PC-9 (cell line): ENCODE measurements at regions of chr16 and their contacts with region 1.

Region 1: DNA sequence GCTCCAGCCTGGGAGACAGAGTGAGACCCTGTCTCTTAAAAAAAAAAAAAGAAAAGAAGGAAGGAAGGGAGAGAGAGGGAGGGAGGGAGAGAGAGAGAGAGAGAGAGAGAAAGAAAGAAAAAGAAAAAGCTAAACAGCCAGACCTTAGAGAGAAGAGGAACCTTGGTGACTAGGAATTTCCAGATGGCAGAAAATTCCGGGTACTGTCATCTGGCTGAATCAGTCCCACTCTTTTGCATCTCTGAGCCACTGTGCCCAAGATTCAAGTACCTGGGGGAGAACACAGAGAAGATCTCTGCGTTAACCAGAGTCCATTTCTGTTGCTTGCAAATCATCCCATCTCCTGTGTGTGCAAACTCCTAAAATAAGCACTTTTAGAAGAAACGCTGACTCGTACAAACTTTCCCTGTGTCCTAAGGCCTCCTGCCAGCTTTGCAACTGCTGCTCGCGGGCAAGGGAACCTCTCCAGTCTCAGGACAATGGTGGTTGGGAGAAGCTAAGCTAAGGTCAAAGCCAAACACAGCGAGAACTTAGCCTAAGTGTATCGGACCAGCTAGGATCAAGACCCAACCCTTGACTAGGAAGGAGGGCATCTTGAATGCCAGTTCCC is 18.0 kb downstream of the BMERB1 start:
- DNase-seq: no peak
- H3K4me3 ChIP-seq: no peak overlapping the region
- H3K27ac ChIP-seq: no peak overlapping the region
- H3K4me1 ChIP-seq: no peaks in the 10 kb centered on the region
- H3K27me3 ChIP-seq: no peaks in the 10 kb centered on the region
- CTCF ChIP-seq: no peak

Region 2: DNA sequence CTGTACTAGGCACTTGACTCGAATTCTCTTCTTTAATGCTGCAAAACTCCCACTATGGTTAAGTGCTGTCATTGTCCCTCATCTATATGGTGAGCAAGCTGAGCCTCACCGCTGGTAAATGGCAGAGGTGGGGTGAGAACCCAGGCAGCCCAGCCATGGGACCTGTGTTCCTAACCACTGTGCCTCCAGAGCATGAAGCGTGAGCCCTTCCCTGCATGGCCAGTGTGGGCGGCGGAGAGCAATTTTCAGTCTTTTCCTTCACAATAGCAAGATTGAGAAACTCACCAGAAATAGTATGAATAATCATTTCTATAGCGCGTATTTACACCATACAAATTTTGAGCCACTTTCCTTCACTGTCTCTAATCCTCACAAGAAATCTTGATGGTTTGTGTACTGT is 810.4 kb before region 1 on chr16:
- CTCF ChIA-PET with region 1: interaction called, 14 read pairs
- POLR2A ChIA-PET with region 1: no interaction called
- intact Hi-C with region 1: no loop called
- DNase-seq: no peak
- H3K4me3 ChIP-seq: no peak overlapping the region
- H3K27ac ChIP-seq: no peak overlapping the region
- H3K4me1 ChIP-seq: no peaks in the 10 kb centered on the region
- H3K27me3 ChIP-seq: no peaks in the 10 kb centered on the region
- CTCF ChIP-seq: no peak

Region 3: DNA sequence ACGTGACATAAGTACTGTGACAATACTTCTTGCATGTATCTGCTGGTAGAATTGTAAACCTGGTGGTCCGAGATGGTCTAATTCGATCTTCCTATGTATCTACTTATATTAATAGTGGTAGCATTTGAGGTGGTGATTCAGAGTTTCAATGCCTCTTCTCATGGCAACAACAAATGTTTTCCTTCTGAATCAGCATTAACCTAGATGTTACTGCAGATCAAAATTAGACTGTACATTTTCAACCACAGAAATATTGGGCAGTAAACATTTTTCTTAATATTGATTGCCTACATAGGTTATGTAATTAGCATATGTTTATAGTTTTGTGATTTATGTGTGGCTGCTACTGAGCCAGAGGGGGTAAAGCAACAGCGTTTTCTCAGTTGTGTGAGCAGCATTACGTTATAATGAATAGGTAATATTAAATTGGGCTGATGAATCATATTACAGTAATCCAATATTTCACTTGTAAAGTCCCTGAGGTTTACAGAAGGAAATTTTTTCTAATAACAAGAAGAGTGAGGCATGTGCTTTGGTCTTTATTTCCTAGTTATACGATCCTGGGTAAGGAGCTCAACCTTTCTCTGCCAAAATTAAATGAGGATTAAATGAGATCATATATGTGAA is 36.8 kb before region 1 on chr16:
- CTCF ChIA-PET with region 1: no interaction called
- POLR2A ChIA-PET with region 1: no interaction called
- intact Hi-C with region 1: no loop called
- DNase-seq: peak in 1 of 2 experiments; percentile 81
- H3K4me3 ChIP-seq: peak overlapping the region; percentile 30; the same call in 1 of the 2 replicates
- H3K27ac ChIP-seq: peak overlapping the region; percentile 84
- H3K4me1 ChIP-seq: peaks cover 30% of the 10 kb centered on the region
- H3K27me3 ChIP-seq: no peaks in the 10 kb centered on the region
- CTCF ChIP-seq: no peak

Region 4: DNA sequence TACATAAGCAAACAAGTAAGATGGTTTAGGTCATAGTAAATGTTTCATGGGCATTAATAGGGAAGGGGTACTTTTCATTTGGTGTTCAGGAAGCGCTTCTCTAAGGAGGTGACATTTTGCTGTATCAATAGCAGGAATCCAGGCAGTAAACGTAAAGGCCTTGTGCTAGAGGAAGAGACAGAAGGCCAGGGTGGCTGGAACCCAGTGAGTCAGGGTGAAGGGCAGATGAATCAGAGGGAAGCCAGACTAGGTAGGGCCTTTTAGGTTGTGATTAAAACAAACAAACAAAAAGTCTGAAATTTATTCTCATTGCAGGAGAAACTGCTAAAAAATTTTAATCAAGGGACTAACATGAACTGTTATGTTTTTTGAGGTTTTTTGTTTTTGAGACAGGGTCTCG is 11.5 kb before region 1 on chr16:
- CTCF ChIA-PET with region 1: no interaction called
- POLR2A ChIA-PET with region 1: interaction called, 14 read pairs
- intact Hi-C with region 1: no loop called
- DNase-seq: peak in 1 of 2 experiments; percentile 75
- H3K4me3 ChIP-seq: no peak overlapping the region
- H3K27ac ChIP-seq: peak overlapping the region; percentile 81
- H3K4me1 ChIP-seq: peaks cover 41% of the 10 kb centered on the region
- H3K27me3 ChIP-seq: no peaks in the 10 kb centered on the region
- CTCF ChIP-seq: no peak

Region 5: DNA sequence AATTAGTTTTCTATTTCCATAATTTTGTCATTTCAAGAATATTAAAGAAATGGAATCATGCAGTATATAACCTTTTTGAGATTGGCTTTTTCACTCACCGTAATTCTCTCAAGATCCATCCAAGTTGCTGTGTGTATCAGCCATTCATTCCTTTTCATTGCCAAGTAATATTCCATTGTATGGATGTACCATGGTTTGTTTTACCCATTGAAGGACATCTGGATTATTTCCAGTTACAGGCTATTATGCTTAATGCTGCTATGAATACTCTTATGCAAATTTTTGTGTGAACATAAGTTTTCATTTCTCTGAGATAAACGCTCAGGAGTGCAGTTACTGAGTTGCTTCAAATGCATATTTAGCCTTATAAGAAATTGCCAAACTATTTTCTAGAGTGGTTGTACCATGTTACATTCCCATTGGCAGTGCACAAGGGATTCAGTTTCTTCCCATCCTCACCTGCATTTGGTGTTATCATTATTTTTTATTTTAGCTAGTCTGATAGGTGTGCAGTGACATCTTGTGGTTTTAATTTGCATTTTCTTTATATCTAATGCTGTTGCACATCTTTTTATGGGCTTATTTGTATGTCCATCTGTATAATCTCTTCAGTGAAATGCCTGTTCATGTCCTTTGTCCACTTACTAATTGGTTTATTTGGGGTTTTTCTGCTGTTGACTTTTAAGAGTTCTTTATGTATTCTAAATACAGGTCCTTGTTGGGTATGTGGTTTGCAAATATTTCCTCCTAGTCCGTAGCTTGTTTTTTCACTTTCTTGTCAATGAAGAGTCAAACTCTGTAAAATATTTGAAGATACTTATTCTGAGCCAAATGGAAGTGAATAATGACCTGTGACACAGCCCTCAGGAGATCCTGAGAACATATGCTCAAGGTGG is 14.8 kb after region 1 on chr16:
- CTCF ChIA-PET with region 1: no interaction called
- POLR2A ChIA-PET with region 1: no interaction called
- intact Hi-C with region 1: no loop called
- DNase-seq: peak in 1 of 2 experiments; percentile 50
- H3K4me3 ChIP-seq: no peak overlapping the region
- H3K27ac ChIP-seq: no peak overlapping the region
- H3K4me1 ChIP-seq: peaks cover 20% of the 10 kb centered on the region
- H3K27me3 ChIP-seq: no peaks in the 10 kb centered on the region
- CTCF ChIP-seq: peak; percentile 71